Endothelial cell of umbilical vein (primary cell): ENCODE measurements at regions of chr10 and their contacts with region 1.

Region 1: GRCh38 chr10:128011175-128011979 is 104.5 kb downstream of the PTPRE start:
- DNase-seq: peak; percentile 81
- H3K4me3 ChIP-seq: no peak overlapping the region
- H3K27ac ChIP-seq: no peak overlapping the region
- H3K4me1 ChIP-seq: peaks cover 39% of the 10 kb centered on the region
- H3K27me3 ChIP-seq: no peaks in the 10 kb centered on the region
- CTCF ChIP-seq: peak; percentile 98
- POLR2A ChIP-seq: peak; percentile 43

Region 2: DNA sequence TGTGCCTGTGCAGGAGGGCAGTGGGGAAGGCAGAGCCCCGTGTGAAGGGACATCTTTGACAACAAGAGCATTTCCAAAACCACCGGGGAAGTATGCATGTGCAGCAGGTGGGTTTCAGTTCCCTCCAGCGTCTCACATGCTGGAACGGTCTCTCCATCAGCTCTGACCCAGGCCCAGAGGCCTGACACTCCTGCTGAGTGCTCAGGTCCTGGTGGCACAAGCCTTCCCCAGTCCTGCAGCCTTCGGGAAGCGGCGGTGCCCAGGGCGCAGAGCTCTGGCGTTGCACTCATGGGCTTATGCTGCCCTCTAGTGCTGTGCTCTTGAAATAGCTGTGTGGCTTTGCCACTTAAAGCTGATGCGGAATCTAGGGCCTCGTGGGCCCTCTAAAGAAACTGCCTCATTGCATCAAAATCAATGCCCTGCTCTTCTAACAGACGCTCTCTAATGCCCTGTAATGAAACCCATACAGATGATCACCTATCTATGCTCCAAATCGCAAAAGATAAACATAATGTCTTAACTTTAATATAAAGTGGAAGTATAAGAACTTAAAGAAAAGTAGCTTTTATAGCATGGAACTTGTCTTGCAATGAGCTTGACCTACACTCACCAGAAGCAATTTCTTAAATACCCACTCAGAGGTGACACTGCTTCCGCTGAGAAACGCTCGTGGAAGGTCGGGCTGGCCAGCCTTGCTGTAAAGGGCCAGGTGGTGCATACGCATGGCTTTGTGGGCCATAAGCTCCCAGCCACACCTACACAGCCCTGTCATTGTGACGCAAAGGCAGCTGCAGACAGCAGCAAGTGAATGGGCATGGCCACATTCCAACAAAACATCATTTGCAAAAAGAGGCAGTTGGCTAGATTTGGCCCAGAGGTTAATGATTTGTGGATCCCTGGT is 157.3 kb before region 1 on chr10:
- CTCF ChIA-PET with region 1: interaction called, 10 read pairs
- POLR2A ChIA-PET with region 1: no interaction called
- dilution Hi-C with region 1: no loop called
- intact Hi-C with region 1: no loop called
- DNase-seq: peak; percentile 63
- H3K4me3 ChIP-seq: no peak overlapping the region
- H3K27ac ChIP-seq: no peak overlapping the region
- H3K4me1 ChIP-seq: no peaks in the 10 kb centered on the region
- H3K27me3 ChIP-seq: no peaks in the 10 kb centered on the region
- CTCF ChIP-seq: peak; percentile 71 to 83
- POLR2A ChIP-seq: no peak

Region 3: GRCh38 chr10:127906548-127907377 is 104.6 kb before region 1 on chr10 and contains the start of gene PTPRE:
- CTCF ChIA-PET with region 1: interaction called, 425 read pairs
- POLR2A ChIA-PET with region 1: interaction called, 4 read pairs
- dilution Hi-C with region 1: no loop called
- intact Hi-C with region 1: loop called (anchors 1 kb)
- DNase-seq: peak; percentile 69
- H3K4me3 ChIP-seq: peak within 1 kb of the TSS; percentile 32 to 78 (median 61)
- H3K27ac ChIP-seq: peak within 1 kb of the TSS; percentile 67
- H3K4me1 ChIP-seq: peaks cover 20% of the 10 kb centered on the region
- H3K27me3 ChIP-seq: no peaks in the 10 kb centered on the region
- CTCF ChIP-seq: peak; percentile 72 to 92
- POLR2A ChIP-seq: peak; percentile 24
- total RNA-seq, gene PTPRE: 114 and 116 TPM in 2 replicates

Region 4: DNA sequence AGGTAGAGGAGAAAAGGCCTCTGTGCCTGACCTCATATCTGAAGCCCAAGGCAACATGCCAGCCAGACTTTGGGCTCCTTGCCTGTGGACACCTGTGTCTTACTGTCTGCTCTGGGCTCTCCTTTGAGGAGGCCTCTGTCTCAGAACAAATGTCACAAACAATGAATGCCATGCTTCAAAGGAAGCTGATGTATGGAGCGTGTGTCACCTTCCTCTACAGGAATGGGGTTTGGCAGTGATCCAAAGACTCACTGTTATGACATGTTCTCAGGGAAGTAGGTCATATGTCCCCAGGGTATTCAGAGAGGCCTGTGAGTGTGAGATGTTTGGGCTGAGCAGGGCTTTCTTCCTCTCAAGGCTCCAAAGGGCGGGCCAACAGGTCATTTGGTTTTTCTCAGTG is 66.0 kb before region 1 on chr10:
- CTCF ChIA-PET with region 1: interaction called, 12 read pairs
- POLR2A ChIA-PET with region 1: no interaction called
- dilution Hi-C with region 1: no loop called
- intact Hi-C with region 1: loop called (anchors 1 kb)
- DNase-seq: peak; percentile 94
- H3K4me3 ChIP-seq: no peak overlapping the region
- H3K27ac ChIP-seq: peak overlapping the region; percentile 92
- H3K4me1 ChIP-seq: peaks cover 77% of the 10 kb centered on the region
- H3K27me3 ChIP-seq: no peaks in the 10 kb centered on the region
- CTCF ChIP-seq: no peak
- POLR2A ChIP-seq: peak; percentile 63

Region 5: GRCh38 chr10:127962205-127962604 is 49.2 kb before region 1 on chr10:
- CTCF ChIA-PET with region 1: no interaction called
- POLR2A ChIA-PET with region 1: no interaction called
- dilution Hi-C with region 1: no loop called
- intact Hi-C with region 1: no loop called
- DNase-seq: no peak
- H3K4me3 ChIP-seq: no peak overlapping the region
- H3K27ac ChIP-seq: no peak overlapping the region
- H3K4me1 ChIP-seq: peaks cover 9% of the 10 kb centered on the region
- H3K27me3 ChIP-seq: no peaks in the 10 kb centered on the region
- CTCF ChIP-seq: no peak
- POLR2A ChIP-seq: no peak

Region 6: GRCh38 chr10:128000471-128001362 is 10.7 kb before region 1 on chr10:
- CTCF ChIA-PET with region 1: interaction called, 26 read pairs
- POLR2A ChIA-PET with region 1: no interaction called
- dilution Hi-C with region 1: no loop called
- intact Hi-C with region 1: no loop called
- DNase-seq: peak; percentile 47
- H3K4me3 ChIP-seq: no peak overlapping the region
- H3K27ac ChIP-seq: no peak overlapping the region
- H3K4me1 ChIP-seq: peaks cover 33% of the 10 kb centered on the region
- H3K27me3 ChIP-seq: no peaks in the 10 kb centered on the region
- CTCF ChIP-seq: no peak
- POLR2A ChIP-seq: no peak

Region 7: GRCh38 chr10:128069351-128070051 is 58.1 kb after region 1 on chr10:
- CTCF ChIA-PET with region 1: interaction called, 57 read pairs
- POLR2A ChIA-PET with region 1: no interaction called
- dilution Hi-C with region 1: no loop called
- intact Hi-C with region 1: loop called (anchors 1 kb)
- DNase-seq: peak; percentile 68
- H3K4me3 ChIP-seq: no peak overlapping the region
- H3K27ac ChIP-seq: no peak overlapping the region
- H3K4me1 ChIP-seq: peaks cover 2% of the 10 kb centered on the region
- H3K27me3 ChIP-seq: no peaks in the 10 kb centered on the region
- CTCF ChIP-seq: peak; percentile 65 to 67
- POLR2A ChIP-seq: no peak

Region 8: GRCh38 chr10:128116851-128117615 is 105.7 kb after region 1 on chr10:
- CTCF ChIA-PET with region 1: no interaction called
- POLR2A ChIA-PET with region 1: no interaction called
- dilution Hi-C with region 1: no loop called
- intact Hi-C with region 1: no loop called
- DNase-seq: no peak
- H3K4me3 ChIP-seq: no peak overlapping the region
- H3K27ac ChIP-seq: no peak overlapping the region
- H3K4me1 ChIP-seq: peaks cover 2% of the 10 kb centered on the region
- H3K27me3 ChIP-seq: no peaks in the 10 kb centered on the region
- CTCF ChIP-seq: peak; percentile 18 to 32
- POLR2A ChIP-seq: no peak